ENCODE measurements at regions of chr4 and their contacts with region 1.

Region 1: GRCh38 chr4:103626296-103626695 is 93.5 kb downstream of the TACR3 start:
- DNase-seq: no peak
- H3K4me3 ChIP-seq: no peak overlapping the region
- H3K4me3 Mint-ChIP-seq: no peak overlapping the region
- H3K27ac Mint-ChIP-seq: peak overlapping the region; percentile 45
- H3K4me1 ChIP-seq: peaks cover 23% of the 10 kb centered on the region
- H3K4me1 Mint-ChIP-seq: peaks cover 23% of the 10 kb centered on the region
- H3K27me3 ChIP-seq: no peaks in the 10 kb centered on the region
- H3K27me3 Mint-ChIP-seq: no peaks in the 10 kb centered on the region
- CTCF ChIP-seq: no peak

Region 2: GRCh38 chr4:103567591-103567990 is 58.7 kb before region 1 on chr4:
- CTCF ChIA-PET with region 1: no interaction called
- POLR2A ChIA-PET with region 1: no interaction called
- intact Hi-C with region 1: loop called (anchors 2 kb)
- DNase-seq: no peak
- H3K4me3 ChIP-seq: no peak overlapping the region
- H3K4me3 Mint-ChIP-seq: no peak overlapping the region
- H3K27ac Mint-ChIP-seq: no peak overlapping the region
- H3K4me1 ChIP-seq: peaks cover 19% of the 10 kb centered on the region
- H3K4me1 Mint-ChIP-seq: no peaks in the 10 kb centered on the region
- H3K27me3 ChIP-seq: no peaks in the 10 kb centered on the region
- H3K27me3 Mint-ChIP-seq: peaks cover 12% of the 10 kb centered on the region
- CTCF ChIP-seq: no peak

Region 3: DNA sequence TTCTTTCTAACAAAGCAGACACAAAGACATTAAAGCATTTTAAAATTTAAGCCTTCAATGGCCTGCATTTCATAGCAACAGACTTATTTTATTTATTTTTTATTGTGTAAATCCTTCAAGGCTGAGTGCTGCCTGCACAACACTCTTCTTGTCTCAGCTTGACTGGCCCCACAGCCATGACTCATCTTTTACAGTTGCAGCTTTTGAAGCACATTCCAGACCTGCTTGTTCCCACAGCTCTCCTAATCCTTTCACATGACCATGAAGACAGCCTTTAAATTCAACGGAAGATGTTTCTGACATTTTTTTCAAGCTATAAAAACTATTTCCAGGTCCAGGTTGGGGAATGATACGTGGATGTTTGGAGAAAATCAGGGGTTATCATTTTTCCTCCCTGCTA is 370.3 kb after region 1 on chr4:
- CTCF ChIA-PET with region 1: no interaction called
- POLR2A ChIA-PET with region 1: no interaction called
- intact Hi-C with region 1: no loop called
- DNase-seq: peak; percentile 16 to 61
- H3K4me3 ChIP-seq: no peak overlapping the region
- H3K4me3 Mint-ChIP-seq: no peak overlapping the region
- H3K27ac Mint-ChIP-seq: no peak overlapping the region
- H3K4me1 ChIP-seq: peaks cover 6% of the 10 kb centered on the region; the same call in 1 of the 2 replicates
- H3K4me1 Mint-ChIP-seq: no peaks in the 10 kb centered on the region
- H3K27me3 ChIP-seq: no peaks in the 10 kb centered on the region
- H3K27me3 Mint-ChIP-seq: peaks cover 3% of the 10 kb centered on the region
- CTCF ChIP-seq: no peak

Measured in Caco-2 (cell line).